Posterior vena cava (tissue), 2 donors: ENCODE measurements at regions of chr4 and their contacts with region 1.

Region 1: GRCh38 chr4:77443941-77444340 is 161.7 kb upstream of the CXCL13 start:
- DNase-seq: no peak

Region 2: DNA sequence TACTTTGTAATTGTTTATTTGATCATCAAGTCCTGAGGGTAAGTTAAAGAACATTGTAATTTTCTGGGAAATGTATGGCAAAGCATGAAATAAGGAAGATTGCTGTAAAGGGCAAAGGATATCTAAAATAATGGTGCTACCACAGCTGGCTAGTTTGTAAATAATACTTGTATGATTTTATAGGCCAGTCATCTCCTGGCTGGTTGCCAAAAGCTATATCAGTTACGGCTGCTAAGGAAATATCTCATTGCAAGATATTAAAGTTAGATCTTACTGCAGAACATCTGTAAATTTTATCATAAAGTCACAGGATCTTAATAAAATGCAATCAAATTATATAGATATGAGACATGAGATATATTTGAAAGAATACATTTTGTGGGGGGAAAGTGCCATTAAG is 10.9 kb after region 1 on chr4:
- intact Hi-C with region 1: loop called in 1 of 2 experiments (anchors 1 kb)
- DNase-seq: no peak

Region 3: DNA sequence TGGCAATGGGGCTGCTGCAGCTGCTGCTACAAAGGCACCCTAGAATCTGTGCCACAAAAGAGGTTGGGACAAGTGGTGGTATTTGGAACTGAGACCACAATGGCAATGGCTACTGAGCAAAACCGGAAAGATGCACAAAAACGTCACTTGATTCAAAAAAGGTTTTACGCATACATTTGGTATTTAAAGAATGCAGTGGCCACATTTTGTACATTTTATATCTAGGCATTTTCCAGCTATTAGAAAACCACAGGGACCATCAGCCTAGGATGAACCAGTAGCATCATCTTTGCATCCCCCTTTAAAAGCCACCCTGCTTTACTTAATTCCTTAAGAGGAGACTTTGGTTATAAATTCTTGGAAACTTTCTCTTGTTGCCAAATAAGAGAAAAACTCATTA is 56.9 kb after region 1 on chr4:
- intact Hi-C with region 1: no loop called
- DNase-seq: no peak